ENCODE measurements at regions of chr1 and their contacts with region 1.

Region 1: GRCh38 chr1:220089650-220090556 is at the start of gene BPNT1:
- DNase-seq: peak; percentile 98
- ATAC-seq: peak; percentile 72
- H3K4me3 ChIP-seq: peak within 1 kb of the TSS; percentile 61 to 70
- H3K27ac ChIP-seq: peak within 1 kb of the TSS; percentile 42
- H3K4me1 ChIP-seq: peaks cover 3 to 12% of the 10 kb centered on the region in 2 experiments; a peak in 3 of 4 replicates
- H3K27me3 ChIP-seq: no peaks in the 10 kb centered on the region
- CTCF ChIP-seq: peak in 2 of 3 experiments; percentile 18 to 24; a peak in 3 of 6 replicates
- POLR2A ChIP-seq: peak; percentile 79
- RAD21 ChIP-seq: no peak
- total RNA-seq, gene BPNT1: 25.2 TPM

Region 2: DNA sequence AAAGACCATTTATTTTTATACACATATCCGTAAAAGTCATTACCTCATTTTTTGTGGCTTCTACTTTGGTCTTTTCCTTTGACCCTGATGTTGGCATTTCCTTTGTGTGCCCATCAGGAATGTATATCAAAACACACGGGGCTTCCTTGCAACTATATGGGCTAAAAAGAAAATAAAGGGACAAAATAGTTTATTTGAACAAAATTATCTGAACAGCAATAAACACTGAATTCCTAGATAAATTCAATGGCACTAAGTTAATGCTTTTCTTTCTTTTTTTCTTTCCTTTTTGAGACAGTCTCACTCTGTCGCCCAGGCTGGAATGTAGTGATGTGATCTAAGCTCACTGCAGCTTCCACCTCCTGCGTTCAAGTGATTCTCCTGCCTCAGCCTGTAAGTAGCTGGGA is 88.8 kb before region 1 on chr1:
- CTCF ChIA-PET with region 1: no interaction called
- POLR2A ChIA-PET with region 1: no interaction called
- RAD21 ChIA-PET with region 1: no interaction called
- intact Hi-C with region 1: no loop called
- DNase-seq: no peak
- ATAC-seq: no peak
- H3K4me3 ChIP-seq: no peak overlapping the region
- H3K27ac ChIP-seq: no peak overlapping the region
- H3K4me1 ChIP-seq: no peaks in the 10 kb centered on the region
- H3K27me3 ChIP-seq: no peaks in the 10 kb centered on the region
- CTCF ChIP-seq: no peak
- POLR2A ChIP-seq: no peak
- RAD21 ChIP-seq: no peak

Region 3: GRCh38 chr1:220046052-220046930 is 43.6 kb before region 1 on chr1 and contains the start of gene EPRS1:
- CTCF ChIA-PET with region 1: no interaction called
- POLR2A ChIA-PET with region 1: no interaction called
- RAD21 ChIA-PET with region 1: no interaction called
- intact Hi-C with region 1: loop called (anchors 1 kb)
- DNase-seq: peak; percentile 97
- ATAC-seq: peak; percentile 98
- H3K4me3 ChIP-seq: peak within 1 kb of the TSS; percentile 91 to 98
- H3K27ac ChIP-seq: peak within 1 kb of the TSS; percentile 63
- H3K4me1 ChIP-seq: peaks cover 4 to 12% of the 10 kb centered on the region in 2 experiments; a peak in 3 of 4 replicates
- H3K27me3 ChIP-seq: no peaks in the 10 kb centered on the region
- CTCF ChIP-seq: peak; percentile 3 to 61 (median 42); a peak in 4 of 6 replicates
- POLR2A ChIP-seq: no peak
- RAD21 ChIP-seq: peak; percentile 17; the same call in 1 of the 2 replicates
- total RNA-seq, gene EPRS1: 188 TPM

Region 4: DNA sequence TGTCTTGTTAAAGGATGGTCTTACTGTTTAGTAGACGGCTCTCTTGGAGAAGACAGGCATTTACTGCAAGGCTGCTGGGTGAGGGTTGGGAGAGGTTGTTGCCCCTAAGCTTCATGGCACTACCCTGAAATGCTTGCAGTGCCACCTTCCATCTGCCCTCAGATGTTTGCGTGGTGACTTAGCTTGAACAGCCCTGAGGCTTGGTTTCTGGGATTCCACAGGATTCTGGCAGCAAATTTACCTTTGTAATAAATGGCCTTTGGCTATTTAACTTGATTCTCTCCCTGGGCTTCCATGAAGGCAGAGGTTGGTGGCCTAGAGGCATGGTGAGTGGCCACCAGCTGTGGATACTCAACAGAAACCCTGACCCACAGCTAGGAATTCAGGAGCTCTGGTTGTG is 708.5 kb after region 1 on chr1:
- CTCF ChIA-PET with region 1: no interaction called
- POLR2A ChIA-PET with region 1: no interaction called
- RAD21 ChIA-PET with region 1: interaction called in 1 of 2 experiments, 10 read pairs
- intact Hi-C with region 1: no loop called
- DNase-seq: no peak
- ATAC-seq: no peak
- H3K4me3 ChIP-seq: no peak overlapping the region
- H3K27ac ChIP-seq: no peak overlapping the region
- H3K4me1 ChIP-seq: no peaks in the 10 kb centered on the region
- H3K27me3 ChIP-seq: no peaks in the 10 kb centered on the region
- CTCF ChIP-seq: no peak
- POLR2A ChIP-seq: no peak
- RAD21 ChIP-seq: no peak